Activated CD4-positive, alpha-beta memory T cell treated with anti-CD3 and anti-CD28 coated beads, Interleukin-2, amount 10 ng/mL, durations not matched to agents 7 days and 5 days (primary cell): ENCODE measurements at regions of chr1 and their contacts with region 1.

Region 1: GRCh38 chr1:226121587-226122400 is 59.3 kb downstream of the H3-3A start:
- DNase-seq: peak; percentile 79
- H3K4me3 Mint-ChIP-seq: peak overlapping the region; percentile 69
- H3K27ac Mint-ChIP-seq: peak overlapping the region; percentile 84
- H3K4me1 Mint-ChIP-seq: peaks cover 46% of the 10 kb centered on the region
- H3K27me3 Mint-ChIP-seq: peaks cover 4% of the 10 kb centered on the region

Region 2: GRCh38 chr1:225911191-225912130 is 210.3 kb before region 1 on chr1:
- CTCF ChIA-PET with region 1: no interaction called
- POLR2A ChIA-PET with region 1: no interaction called
- DNase-seq: peak; percentile 74
- H3K4me3 Mint-ChIP-seq: no peak overlapping the region
- H3K27ac Mint-ChIP-seq: no peak overlapping the region
- H3K4me1 Mint-ChIP-seq: peaks cover 4% of the 10 kb centered on the region
- H3K27me3 Mint-ChIP-seq: peaks cover 6% of the 10 kb centered on the region

Region 3: DNA sequence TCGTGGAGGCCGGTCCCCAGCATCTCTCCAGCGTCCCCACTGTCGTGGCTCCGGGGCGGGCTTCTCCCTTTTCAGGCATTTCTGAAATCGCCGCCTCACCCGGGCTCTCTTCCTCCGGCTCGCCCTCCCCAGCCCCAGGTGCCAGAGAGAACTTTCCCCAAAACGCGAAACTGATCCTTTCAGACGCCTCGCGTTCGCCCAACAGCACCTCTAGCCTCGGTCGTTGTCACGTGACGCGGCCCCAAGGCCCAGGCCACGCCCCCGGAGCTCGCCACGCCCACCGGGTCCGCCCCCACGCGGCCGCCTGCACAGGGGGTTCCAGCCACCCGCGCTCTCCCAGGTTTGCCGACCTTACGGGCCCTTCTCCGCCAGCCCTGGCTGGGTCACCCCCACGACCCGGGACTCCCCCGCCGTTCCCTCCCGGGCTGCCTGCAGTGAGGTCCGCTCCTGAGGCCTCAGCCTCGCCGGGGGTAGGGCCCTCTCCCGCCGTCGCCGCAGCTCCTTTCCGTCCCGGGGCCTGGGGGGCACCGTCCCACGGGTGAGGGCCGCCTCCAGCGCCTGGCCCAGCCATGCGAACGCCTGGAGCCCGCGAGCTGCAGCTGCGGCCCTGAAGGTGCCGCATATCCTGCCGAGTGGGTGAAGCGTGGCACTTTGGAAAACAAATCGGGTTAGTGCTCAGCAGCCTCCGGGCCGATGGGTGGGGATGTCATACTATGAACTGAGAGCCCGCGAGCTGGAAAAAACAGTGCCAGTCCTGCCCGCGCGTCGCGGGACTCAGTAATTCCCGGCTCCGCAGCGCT is 38.3 kb before region 1 on chr1:
- CTCF ChIA-PET with region 1: interaction called, 5 read pairs
- POLR2A ChIA-PET with region 1: interaction called, 11 read pairs
- DNase-seq: peak; percentile 91
- H3K4me3 Mint-ChIP-seq: peak overlapping the region; percentile 93
- H3K27ac Mint-ChIP-seq: peak overlapping the region; percentile 54
- H3K4me1 Mint-ChIP-seq: peaks cover 8% of the 10 kb centered on the region
- H3K27me3 Mint-ChIP-seq: peaks cover 6% of the 10 kb centered on the region

Region 4: GRCh38 chr1:226135059-226135651 is 13.4 kb after region 1 on chr1:
- CTCF ChIA-PET with region 1: interaction called, 21 read pairs
- POLR2A ChIA-PET with region 1: interaction called, 6 read pairs
- DNase-seq: no peak
- H3K4me3 Mint-ChIP-seq: no peak overlapping the region
- H3K27ac Mint-ChIP-seq: no peak overlapping the region
- H3K4me1 Mint-ChIP-seq: no peaks in the 10 kb centered on the region
- H3K27me3 Mint-ChIP-seq: no peaks in the 10 kb centered on the region

Region 5: GRCh38 chr1:226162898-226163297 is 41.1 kb after region 1 on chr1:
- CTCF ChIA-PET with region 1: interaction called, 16 read pairs
- POLR2A ChIA-PET with region 1: no interaction called
- DNase-seq: no peak
- H3K4me3 Mint-ChIP-seq: no peak overlapping the region
- H3K27ac Mint-ChIP-seq: no peak overlapping the region
- H3K4me1 Mint-ChIP-seq: peaks cover 8% of the 10 kb centered on the region
- H3K27me3 Mint-ChIP-seq: no peaks in the 10 kb centered on the region

Region 6: DNA sequence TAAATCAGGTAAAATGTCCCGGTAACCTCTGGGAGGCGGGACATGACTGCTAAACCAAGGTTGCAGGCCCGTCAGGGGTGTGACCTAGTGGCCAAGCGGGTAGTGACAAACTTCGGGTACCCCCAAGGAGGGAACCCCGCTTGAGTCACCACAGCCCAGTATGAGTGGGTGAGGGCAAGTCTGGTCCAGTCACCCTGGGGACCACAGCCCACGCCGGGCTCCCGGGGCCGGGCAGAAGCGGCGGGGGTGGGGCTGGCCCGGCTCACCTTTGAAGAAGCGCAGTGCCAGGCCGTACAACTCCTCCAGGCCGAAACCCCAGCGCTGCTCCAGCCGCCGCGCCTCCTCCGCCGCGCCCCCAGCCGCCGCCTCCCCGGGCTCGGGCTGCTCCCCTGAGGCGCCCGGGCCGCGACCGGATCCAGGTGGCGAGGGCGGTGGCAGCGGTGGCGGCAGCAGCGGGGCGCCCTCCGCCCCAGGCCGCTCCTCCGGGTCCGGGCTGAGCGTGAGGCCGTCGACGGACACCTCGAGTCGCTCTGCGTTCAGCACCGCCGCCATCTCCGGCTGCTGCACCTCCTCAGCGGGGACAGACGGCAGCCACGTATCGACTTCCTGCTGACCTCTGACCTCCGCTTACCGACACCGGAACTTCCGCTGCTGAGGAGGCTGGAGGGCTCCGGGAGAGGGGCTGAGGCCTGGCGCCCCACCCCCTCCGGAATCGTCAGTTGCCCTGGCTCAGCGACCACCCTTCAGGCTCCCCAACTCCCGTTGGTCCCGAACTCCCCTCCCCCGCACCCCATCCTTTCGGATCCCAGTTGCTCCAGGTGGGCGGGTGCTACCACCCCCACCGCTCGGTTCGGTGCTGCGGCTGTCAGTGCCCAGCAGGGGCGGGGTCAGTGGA is 64.6 kb after region 1 on chr1 and contains the start of gene ACBD3:
- CTCF ChIA-PET with region 1: interaction called, 56 read pairs
- POLR2A ChIA-PET with region 1: interaction called, 13 read pairs
- DNase-seq: peak; percentile 89
- H3K4me3 Mint-ChIP-seq: peak within 1 kb of the TSS; percentile 96
- H3K27ac Mint-ChIP-seq: peak within 1 kb of the TSS; percentile 90
- H3K4me1 Mint-ChIP-seq: peaks cover 29% of the 10 kb centered on the region
- H3K27me3 Mint-ChIP-seq: no peaks in the 10 kb centered on the region
- total RNA-seq, gene ACBD3: 22.5 to 24.6 TPM

Region 7: DNA sequence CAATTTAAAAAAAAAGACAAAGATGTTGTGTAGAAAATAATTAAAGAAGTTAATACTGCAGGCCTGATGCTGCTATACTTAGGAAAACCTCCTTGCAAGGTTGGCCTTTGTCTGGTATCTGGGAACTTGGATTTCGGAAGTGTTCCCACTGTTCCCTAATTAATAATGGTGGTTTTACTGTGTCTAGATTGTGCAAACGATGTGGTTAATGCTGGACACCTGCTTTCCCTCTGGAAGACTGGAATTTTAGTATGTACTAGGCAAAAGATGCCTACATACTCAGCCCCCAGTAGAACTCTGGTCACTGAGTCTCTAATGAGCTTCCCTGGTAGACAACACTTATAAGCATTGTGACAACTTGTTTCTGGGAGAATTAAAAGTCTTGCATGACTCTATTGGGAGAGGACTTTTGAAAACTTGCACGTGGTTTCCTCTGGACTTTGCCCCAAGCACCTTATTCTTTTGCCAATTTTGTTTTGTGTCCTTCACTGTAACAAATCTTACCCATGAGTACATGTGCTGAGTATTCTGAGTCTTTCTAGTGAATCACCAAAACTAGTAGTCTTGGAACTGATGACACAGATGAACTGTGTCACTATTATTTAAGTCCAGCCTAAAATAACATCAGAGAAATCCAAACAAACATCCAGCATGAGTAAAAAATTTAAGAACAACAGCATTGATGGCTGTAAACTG is 146.8 kb after region 1 on chr1:
- CTCF ChIA-PET with region 1: no interaction called
- POLR2A ChIA-PET with region 1: no interaction called
- DNase-seq: no peak
- H3K4me3 Mint-ChIP-seq: no peak overlapping the region
- H3K27ac Mint-ChIP-seq: no peak overlapping the region
- H3K4me1 Mint-ChIP-seq: no peaks in the 10 kb centered on the region
- H3K27me3 Mint-ChIP-seq: no peaks in the 10 kb centered on the region

Region 8: DNA sequence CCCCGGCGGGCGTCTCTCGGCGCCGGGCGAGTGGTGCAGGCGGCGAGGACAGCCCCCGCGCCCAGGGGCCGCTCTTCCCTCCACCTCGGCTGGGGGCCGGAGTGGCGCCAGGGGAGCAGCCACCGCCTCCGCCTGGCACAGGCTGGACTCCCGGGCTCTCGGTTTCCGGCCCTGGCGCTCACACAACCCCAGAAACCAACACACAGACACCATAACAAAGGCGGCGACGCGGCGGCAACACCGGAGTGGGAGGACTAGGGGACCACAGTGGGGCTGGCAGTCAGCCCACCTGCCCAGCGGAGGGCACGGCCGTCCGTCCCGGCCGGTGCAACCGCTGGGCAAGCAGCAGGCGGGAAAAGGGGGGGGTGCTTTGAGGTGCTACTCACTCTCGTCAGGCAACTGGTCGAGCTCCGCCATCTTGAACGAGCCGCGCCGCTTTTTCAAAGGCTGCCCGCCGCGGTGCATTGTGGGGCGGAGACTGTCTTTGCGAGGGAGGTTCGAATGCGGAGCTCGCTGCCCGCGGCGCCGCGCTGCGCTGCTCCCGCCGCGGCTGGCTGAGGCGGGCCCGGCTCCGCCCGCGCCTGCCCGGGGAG is 187.0 kb after region 1 on chr1 and contains the start of gene LIN9:
- CTCF ChIA-PET with region 1: interaction called, 14 read pairs
- POLR2A ChIA-PET with region 1: interaction called, 8 read pairs
- DNase-seq: peak; percentile 94
- H3K4me3 Mint-ChIP-seq: peak within 1 kb of the TSS; percentile 89
- H3K27ac Mint-ChIP-seq: peak within 1 kb of the TSS; percentile 87
- H3K4me1 Mint-ChIP-seq: peaks cover 32% of the 10 kb centered on the region
- H3K27me3 Mint-ChIP-seq: peaks cover 13% of the 10 kb centered on the region
- total RNA-seq, gene LIN9: 10.4 to 11.5 TPM

Region 9: GRCh38 chr1:226407497-226408284 is 285.9 kb after region 1 on chr1 and contains the start of gene PARP1:
- CTCF ChIA-PET with region 1: interaction called, 25 read pairs
- POLR2A ChIA-PET with region 1: interaction called, 9 read pairs
- DNase-seq: peak; percentile 92
- H3K4me3 Mint-ChIP-seq: peak within 1 kb of the TSS; percentile 85
- H3K27ac Mint-ChIP-seq: peak within 1 kb of the TSS; percentile 89
- H3K4me1 Mint-ChIP-seq: peaks cover 35% of the 10 kb centered on the region
- H3K27me3 Mint-ChIP-seq: peaks cover 2% of the 10 kb centered on the region
- total RNA-seq, gene PARP1: 191 to 194 TPM